ENCODE measurements at regions of chr3 and their contacts with region 1.

Region 1: GRCh38 chr3:28328188-28329151 is 20.1 kb upstream of the ZCWPW2 start:
- H3K4me3 Mint-ChIP-seq: no peak overlapping the region
- H3K27ac Mint-ChIP-seq: no peak overlapping the region
- H3K4me1 Mint-ChIP-seq: no peaks in the 10 kb centered on the region
- H3K27me3 Mint-ChIP-seq: no peaks in the 10 kb centered on the region

Region 2: GRCh38 chr3:27914199-27914598 is 414.3 kb before region 1 on chr3:
- intact Hi-C with region 1: loop called (anchors 2 kb)
- H3K4me3 Mint-ChIP-seq: no peak overlapping the region
- H3K27ac Mint-ChIP-seq: no peak overlapping the region
- H3K4me1 Mint-ChIP-seq: no peaks in the 10 kb centered on the region
- H3K27me3 Mint-ChIP-seq: no peaks in the 10 kb centered on the region

Region 3: DNA sequence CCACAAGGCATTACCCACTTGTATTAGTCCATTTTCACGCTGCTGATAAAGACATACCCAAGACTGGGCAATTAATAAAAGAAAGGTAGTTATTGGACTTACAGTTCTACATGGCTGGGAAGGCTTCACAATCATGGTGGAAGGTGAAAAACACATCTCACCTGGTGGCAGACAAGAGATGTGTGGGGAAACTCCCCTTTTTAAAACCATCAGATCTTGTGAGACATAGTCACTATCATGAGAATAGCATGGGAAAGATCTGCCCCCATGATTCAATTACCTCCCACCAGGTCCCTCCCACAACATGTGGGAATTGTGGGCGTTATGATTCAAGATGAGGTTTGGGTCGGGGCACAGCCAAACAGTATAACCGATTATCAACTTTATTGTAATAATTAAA is 104.0 kb before region 1 on chr3:
- intact Hi-C with region 1: no loop called
- H3K4me3 Mint-ChIP-seq: no peak overlapping the region
- H3K27ac Mint-ChIP-seq: no peak overlapping the region
- H3K4me1 Mint-ChIP-seq: no peaks in the 10 kb centered on the region
- H3K27me3 Mint-ChIP-seq: no peaks in the 10 kb centered on the region